Common myeloid progenitor, CD34-positive (primary cell): ENCODE measurements at regions of chr11 and their contacts with region 1.

Region 1: GRCh38 chr11:21475276-21475675 is 717.6 kb upstream of the ANO5 start:
- DNase-seq: no peak
- H3K4me3 ChIP-seq: no peak overlapping the region
- H3K27ac ChIP-seq: no peak overlapping the region
- H3K4me1 ChIP-seq: no peaks in the 10 kb centered on the region
- H3K27me3 ChIP-seq: no peaks in the 10 kb centered on the region

Region 2: DNA sequence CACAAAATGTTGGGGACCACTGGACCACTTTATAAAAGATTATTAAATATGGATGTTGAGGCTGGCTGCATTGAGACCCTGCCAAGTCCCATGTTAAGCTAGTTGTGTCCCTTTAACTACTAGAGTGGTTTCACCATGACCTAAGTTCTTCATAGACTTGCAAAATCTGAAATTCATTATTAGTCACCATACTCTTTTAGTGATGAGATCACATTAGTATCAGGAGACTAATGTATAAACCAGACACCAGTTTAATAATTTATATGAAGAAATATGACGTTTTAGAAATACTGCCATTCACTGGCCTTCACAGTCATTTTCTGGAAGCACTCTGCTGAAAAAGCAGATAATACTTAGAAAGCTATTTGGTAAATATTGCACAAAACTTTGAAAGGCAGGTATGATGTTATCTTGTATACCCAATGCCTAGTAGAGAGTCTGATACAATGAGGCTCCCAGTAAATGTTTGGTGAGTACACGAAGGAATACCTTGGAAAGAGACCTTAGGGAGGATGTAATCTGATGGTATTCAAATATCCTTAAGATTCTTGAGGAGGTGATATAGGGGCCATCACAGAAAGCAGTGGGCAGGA is 10.6 kb before region 1 on chr11:
- CTCF ChIA-PET with region 1: interaction called, 12 read pairs
- POLR2A ChIA-PET with region 1: no interaction called
- DNase-seq: no peak
- H3K4me3 ChIP-seq: no peak overlapping the region
- H3K27ac ChIP-seq: no peak overlapping the region
- H3K4me1 ChIP-seq: peaks cover 0 to 5% (median 1%) of the 10 kb centered on the region in 4 experiments
- H3K27me3 ChIP-seq: no peaks in the 10 kb centered on the region